MCF 10A (cell line): ENCODE measurements at regions of chr6 and their contacts with region 1.

Region 1: DNA sequence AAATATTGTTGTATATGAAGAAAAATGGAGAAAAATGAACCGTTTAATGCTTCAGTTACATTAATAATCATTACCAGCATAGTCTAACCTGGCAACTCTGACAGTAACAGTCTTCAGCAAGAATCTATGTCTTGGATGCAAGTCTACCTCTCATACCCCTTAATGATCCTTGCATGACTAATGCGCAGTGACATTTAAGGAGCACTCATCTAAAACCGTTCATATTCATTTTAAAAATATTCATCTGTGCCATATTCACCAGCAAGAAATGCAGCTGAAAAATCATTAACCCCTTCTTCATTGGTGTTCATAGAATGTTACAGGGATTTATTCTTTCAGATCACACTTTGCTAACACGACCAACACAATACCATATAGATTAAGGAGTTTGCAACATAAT is 227.2 kb upstream of the ASCC3 start:
- DNase-seq: no peak
- H3K4me3 Mint-ChIP-seq: no peak overlapping the region
- H3K27ac Mint-ChIP-seq: no peak overlapping the region
- H3K4me1 Mint-ChIP-seq: no peaks in the 10 kb centered on the region
- H3K27me3 Mint-ChIP-seq: no peaks in the 10 kb centered on the region
- CTCF ChIP-seq: no peak

Region 2: DNA sequence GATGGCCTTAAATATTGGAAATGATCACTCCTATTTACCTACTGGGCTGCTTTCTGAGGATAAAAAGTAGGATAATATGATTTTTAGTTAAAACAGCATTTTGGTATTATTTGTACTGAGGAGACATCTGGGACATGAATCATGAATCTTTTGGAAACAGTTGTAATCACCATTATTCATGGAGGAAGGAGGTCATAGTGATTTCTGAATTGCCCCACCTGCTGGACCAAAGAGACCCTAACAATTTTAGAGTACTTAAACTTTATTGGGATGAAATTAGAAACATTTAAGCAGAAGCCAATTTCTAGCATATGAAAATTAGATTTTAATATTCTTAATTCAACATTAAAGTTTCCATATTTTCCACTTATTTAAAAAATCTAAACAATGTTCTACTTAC is 535.1 kb before region 1 on chr6:
- CTCF ChIA-PET with region 1: no interaction called
- POLR2A ChIA-PET with region 1: no interaction called
- intact Hi-C with region 1: no loop called
- DNase-seq: peak; percentile 46
- H3K4me3 Mint-ChIP-seq: no peak overlapping the region
- H3K27ac Mint-ChIP-seq: no peak overlapping the region
- H3K4me1 Mint-ChIP-seq: no peaks in the 10 kb centered on the region
- H3K27me3 Mint-ChIP-seq: no peaks in the 10 kb centered on the region
- CTCF ChIP-seq: peak; percentile 22

Region 3: GRCh38 chr6:100775667-100776066 is 332.6 kb before region 1 on chr6:
- CTCF ChIA-PET with region 1: no interaction called
- POLR2A ChIA-PET with region 1: no interaction called
- intact Hi-C with region 1: loop called (anchors 10 kb)
- DNase-seq: no peak
- H3K4me3 Mint-ChIP-seq: no peak overlapping the region
- H3K27ac Mint-ChIP-seq: no peak overlapping the region
- H3K4me1 Mint-ChIP-seq: peaks cover 6% of the 10 kb centered on the region
- H3K27me3 Mint-ChIP-seq: no peaks in the 10 kb centered on the region
- CTCF ChIP-seq: peak; percentile 14

Region 4: DNA sequence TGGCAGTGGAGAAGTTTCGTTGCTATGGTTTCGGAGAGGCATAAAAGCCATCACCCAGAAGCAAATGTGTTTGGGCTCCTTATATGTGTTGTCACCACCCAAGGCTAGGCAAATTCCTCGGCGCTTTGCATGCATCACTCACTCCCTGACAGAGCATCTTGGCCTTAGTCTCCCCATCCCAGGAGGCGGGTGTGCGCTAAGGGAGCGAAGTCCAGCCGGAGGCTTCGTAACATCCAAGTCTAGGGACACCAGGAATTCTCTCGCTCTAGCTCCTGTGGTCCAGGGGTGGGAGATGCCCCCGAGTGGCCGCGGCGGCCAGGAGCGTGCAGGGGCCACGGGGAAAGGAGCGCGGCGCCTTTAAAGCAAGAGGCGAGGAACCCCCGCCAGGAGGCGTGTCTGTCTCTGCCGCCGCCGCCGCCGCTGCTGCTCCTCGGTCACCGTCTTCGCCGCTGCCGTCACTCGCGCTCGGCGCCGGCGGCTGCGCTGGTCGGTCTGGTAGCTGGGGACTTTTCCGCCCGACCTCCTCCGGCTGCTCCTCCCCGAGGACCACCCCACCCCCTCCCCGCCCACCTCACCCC is 285.1 kb after region 1 on chr6 and contains the start of gene GRIK2:
- CTCF ChIA-PET with region 1: no interaction called
- POLR2A ChIA-PET with region 1: no interaction called
- intact Hi-C with region 1: no loop called
- DNase-seq: peak; percentile 59
- H3K4me3 Mint-ChIP-seq: peak within 1 kb of the TSS; percentile 82
- H3K27ac Mint-ChIP-seq: no peak within 1 kb of the TSS
- H3K4me1 Mint-ChIP-seq: peaks cover 13% of the 10 kb centered on the region
- H3K27me3 Mint-ChIP-seq: no peaks in the 10 kb centered on the region
- CTCF ChIP-seq: peak; percentile 49
- total RNA-seq, gene GRIK2: 0.89 and 2.5 TPM in 2 replicates